Heart left ventricle (tissue), 16 donors: ENCODE measurements at regions of chr14 and their contacts with region 1.

Region 1: DNA sequence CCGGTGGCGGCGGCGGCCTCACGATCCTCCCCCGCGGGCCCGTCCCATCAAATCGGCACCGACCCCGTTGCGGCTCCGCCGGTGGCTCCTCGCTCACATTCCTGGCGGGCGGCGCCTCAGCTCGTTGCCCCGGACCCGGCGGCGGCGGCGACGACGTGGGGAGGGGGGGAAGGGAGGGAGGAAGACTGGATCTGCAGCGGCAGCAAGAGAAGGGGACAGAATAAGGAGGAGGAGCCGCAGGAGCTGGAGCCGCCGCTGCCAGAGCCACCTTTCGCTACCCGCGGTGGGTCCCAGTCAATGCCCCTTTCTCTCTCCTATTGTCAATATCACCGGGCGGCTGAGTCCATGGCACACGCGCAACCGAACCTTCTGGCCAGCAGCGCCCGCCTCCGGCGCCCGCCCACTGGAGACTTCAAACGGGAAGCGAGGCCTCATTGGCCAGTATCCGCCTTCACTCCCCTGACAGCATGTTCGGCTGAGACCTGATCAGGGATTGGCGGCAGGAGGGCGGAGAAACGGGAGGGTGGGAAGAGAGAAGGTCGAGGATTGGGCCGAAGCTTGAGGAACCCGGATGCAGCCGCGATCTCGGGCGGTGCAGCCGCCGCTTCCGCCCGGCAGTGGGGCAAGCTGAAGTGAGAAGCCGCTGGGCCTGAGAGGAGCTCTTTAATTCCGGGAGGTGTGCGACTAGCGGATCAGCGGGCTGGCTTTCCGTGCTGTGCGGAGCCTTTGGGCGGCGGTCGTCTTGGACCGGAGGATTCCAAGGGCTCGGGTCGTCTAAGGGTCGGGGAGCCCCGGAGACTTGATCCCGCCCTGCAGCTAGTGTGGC is at the start of gene PPP2R5E:
- DNase-seq: peak; percentile 98 to 99 (median 99)
- ATAC-seq: peak; percentile 99 to 100 (median 100)
- H3K4me3 ChIP-seq: peak within 1 kb of the TSS; percentile 83 to 100 (median 94)
- H3K27ac ChIP-seq: peak within 1 kb of the TSS; percentile 54 to 96 (median 92)
- H3K4me1 ChIP-seq: peaks cover 0 to 26% (median 21%) of the 10 kb centered on the region in 12 donors
- H3K27me3 ChIP-seq: no peaks in the 10 kb centered on the region
- CTCF ChIP-seq: peak in 1 of 12 donors; percentile 3
- POLR2A ChIP-seq: peak in 1 of 2 donors; percentile 87
- total RNA-seq, gene PPP2R5E: 16.2 to 44.2 (median 37.6) TPM

Region 2: DNA sequence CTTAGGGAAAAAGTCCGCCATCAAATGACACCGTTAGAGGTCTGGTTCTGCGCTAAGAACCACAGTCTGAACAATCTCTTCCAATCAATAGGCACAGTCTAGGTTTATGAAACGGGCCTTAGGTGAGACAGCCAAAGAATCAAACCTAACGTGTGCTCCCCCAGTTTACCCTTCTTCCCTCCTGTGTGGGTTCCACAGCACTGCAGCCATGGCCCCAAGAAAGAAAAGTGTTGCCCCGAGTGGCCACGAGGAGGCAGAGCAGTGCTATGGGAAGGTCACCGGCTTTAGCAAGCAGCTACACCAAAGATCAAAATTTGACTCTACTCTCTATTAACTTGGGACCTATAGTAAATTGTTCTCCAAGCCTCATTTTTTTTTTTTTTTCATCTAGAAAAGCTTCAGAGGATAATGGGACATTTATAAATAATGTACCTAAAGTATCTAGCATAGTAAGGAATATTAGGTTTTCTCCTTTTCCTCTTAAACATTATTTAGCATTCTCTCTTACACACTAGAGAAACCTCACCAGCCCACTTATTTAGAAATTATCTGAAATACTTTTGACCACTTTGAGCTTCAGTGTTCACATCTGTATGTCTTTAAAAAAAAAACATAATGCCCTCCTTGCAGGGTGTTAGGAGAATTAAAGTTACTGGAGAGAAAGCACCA is 154.3 kb before region 1 on chr14:
- intact Hi-C with region 1: loop called (anchors 1 to 5 kb)
- DNase-seq: peak; percentile 35 to 70 (median 45)
- ATAC-seq: peak; percentile 79 to 88 (median 86)
- H3K4me3 ChIP-seq: no peak overlapping the region
- H3K27ac ChIP-seq: no peak overlapping the region
- H3K4me1 ChIP-seq: no peaks in the 10 kb centered on the region
- H3K27me3 ChIP-seq: no peaks in the 10 kb centered on the region
- CTCF ChIP-seq: peak; percentile 73 to 86 (median 79)
- POLR2A ChIP-seq: no peak

Region 3: GRCh38 chr14:63426838-63427352 is 116.3 kb before region 1 on chr14:
- intact Hi-C with region 1: loop called in 2 of 10 experiments (anchors 5 to 10 kb)
- DNase-seq: no peak
- ATAC-seq: no peak
- H3K4me3 ChIP-seq: no peak overlapping the region
- H3K27ac ChIP-seq: no peak overlapping the region
- H3K4me1 ChIP-seq: peaks cover 0 to 32% (median 14%) of the 10 kb centered on the region in 12 donors
- H3K27me3 ChIP-seq: no peaks in the 10 kb centered on the region
- CTCF ChIP-seq: no peak
- POLR2A ChIP-seq: no peak

Region 4: GRCh38 chr14:63437953-63438757 is 105.1 kb before region 1 on chr14:
- intact Hi-C with region 1: loop called in 3 of 10 experiments (anchors 5 kb)
- DNase-seq: peak in 4 of 5 donors; percentile 40 to 57 (median 54)
- ATAC-seq: peak; percentile 2 to 71 (median 64)
- H3K4me3 ChIP-seq: peak overlapping the region in 8 of 12 donors; percentile 19 to 41 (median 30)
- H3K27ac ChIP-seq: peak overlapping the region in 11 of 12 donors; percentile 44 to 76 (median 61)
- H3K4me1 ChIP-seq: peaks cover 13 to 68% (median 44%) of the 10 kb centered on the region in 12 donors
- H3K27me3 ChIP-seq: no peaks in the 10 kb centered on the region
- CTCF ChIP-seq: peak in 7 of 12 donors; percentile 11 to 40 (median 22)
- POLR2A ChIP-seq: no peak

Region 5: GRCh38 chr14:63641473-63642228 is 98.4 kb after region 1 on chr14 and contains the start of gene WDR89:
- intact Hi-C with region 1: loop called in 7 of 10 experiments (anchors 1 to 10 kb)
- DNase-seq: peak; percentile 97 to 98 (median 98)
- ATAC-seq: peak; percentile 98 to 99 (median 98)
- H3K4me3 ChIP-seq: peak within 1 kb of the TSS; percentile 35 to 82 (median 70)
- H3K27ac ChIP-seq: peak within 1 kb of the TSS; percentile 84 to 96 (median 92)
- H3K4me1 ChIP-seq: peaks cover 0 to 28% (median 10%) of the 10 kb centered on the region in 12 donors
- H3K27me3 ChIP-seq: no peaks in the 10 kb centered on the region
- CTCF ChIP-seq: peak; percentile 50 to 77 (median 68)
- POLR2A ChIP-seq: peak in 1 of 2 donors; percentile 44
- total RNA-seq, gene WDR89: 3.3 to 7.6 (median 6.3) TPM